Transverse colon (tissue), 4 donors: ENCODE measurements at regions of chr9 and their contacts with region 1.

Region 1: GRCh38 chr9:1298027-1298426 is 247.9 kb downstream of the DMRT2 start:
- DNase-seq: no peak
- H3K4me3 ChIP-seq: no peak overlapping the region
- H3K27ac ChIP-seq: no peak overlapping the region
- H3K4me1 ChIP-seq: no peaks in the 10 kb centered on the region
- H3K27me3 ChIP-seq: no peaks in the 10 kb centered on the region
- CTCF ChIP-seq: no peak
- EP300 ChIP-seq: no peak
- POLR2A ChIP-seq: no peak

Region 2: GRCh38 chr9:1100945-1101344 is 197.1 kb before region 1 on chr9:
- in situ Hi-C with region 1: no loop called
- intact Hi-C with region 1: loop called (anchors 10 kb)
- DNase-seq: peak; percentile 50
- H3K4me3 ChIP-seq: no peak overlapping the region
- H3K27ac ChIP-seq: no peak overlapping the region
- H3K4me1 ChIP-seq: no peaks in the 10 kb centered on the region
- H3K27me3 ChIP-seq: peaks cover 2% of the 10 kb centered on the region
- CTCF ChIP-seq: peak; percentile 41 to 63 (median 52)
- EP300 ChIP-seq: no peak
- POLR2A ChIP-seq: no peak